ENCODE measurements at regions of chr10 and their contacts with region 1.

Region 1: DNA sequence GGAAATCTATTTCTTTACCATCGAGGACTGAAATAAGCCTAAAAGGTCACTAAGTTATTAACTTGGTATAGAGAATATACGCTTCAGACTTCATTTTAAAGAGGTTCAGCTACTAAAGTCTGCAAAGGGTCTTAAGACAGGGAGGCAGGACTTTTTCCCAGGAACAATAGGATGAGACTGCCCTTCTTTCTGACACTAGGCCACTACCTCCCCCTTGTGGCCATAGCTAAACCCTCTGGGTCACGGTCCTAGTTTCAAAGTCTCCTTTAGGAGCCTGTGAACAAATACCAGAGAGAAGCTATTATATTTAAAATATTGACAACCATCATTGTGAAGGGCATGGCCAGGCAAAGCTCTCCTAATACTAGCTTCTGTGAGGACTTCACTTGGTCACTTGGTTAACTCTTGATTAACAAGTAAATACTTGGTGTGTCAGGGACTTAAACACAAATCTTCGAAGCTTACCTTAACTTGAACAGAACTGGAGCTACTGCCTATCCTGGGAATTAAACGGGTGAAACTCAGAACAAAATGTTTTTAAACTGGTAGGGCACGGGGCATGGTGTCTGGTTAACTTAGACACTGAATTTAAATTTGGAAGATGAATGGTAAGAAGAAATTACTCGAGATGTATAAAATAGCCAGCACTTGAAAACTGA is 75.6 kb downstream of the CCDC6 start:
- DNase-seq: no peak
- H3K4me3 ChIP-seq: no peak overlapping the region
- CTCF ChIP-seq: peak; percentile 77

Region 2: GRCh38 chr10:59812519-59813122 is 18.1 kb before region 1 on chr10:
- CTCF ChIA-PET with region 1: interaction called, 12 read pairs
- POLR2A ChIA-PET with region 1: no interaction called
- DNase-seq: no peak
- H3K4me3 ChIP-seq: no peak overlapping the region
- CTCF ChIP-seq: no peak

Region 3: DNA sequence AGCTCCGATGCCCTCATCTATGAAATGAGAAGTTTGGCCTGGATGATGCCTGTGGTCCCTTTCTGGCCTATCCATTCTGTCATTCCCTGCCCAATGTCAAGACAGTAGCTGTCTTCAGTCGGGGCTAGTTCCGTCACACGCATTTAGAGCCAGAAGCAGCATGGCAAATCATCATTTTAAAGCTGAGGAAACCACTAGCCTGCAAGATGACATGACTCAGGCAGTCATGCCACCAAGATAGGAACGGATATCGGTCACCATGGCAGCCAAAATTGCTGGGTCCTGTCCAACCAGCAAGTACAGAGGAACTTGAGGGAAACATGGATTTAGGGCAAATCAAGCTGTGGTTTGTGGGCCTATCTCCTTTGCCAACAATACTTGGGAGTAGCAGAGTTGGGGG is 13.0 kb before region 1 on chr10:
- CTCF ChIA-PET with region 1: interaction called, 12 read pairs
- POLR2A ChIA-PET with region 1: no interaction called
- DNase-seq: no peak
- H3K4me3 ChIP-seq: no peak overlapping the region
- CTCF ChIP-seq: no peak

Region 4: GRCh38 chr10:59847326-59847725 is 16.6 kb after region 1 on chr10:
- CTCF ChIA-PET with region 1: interaction called, 14 read pairs
- POLR2A ChIA-PET with region 1: no interaction called
- DNase-seq: no peak
- H3K4me3 ChIP-seq: no peak overlapping the region
- CTCF ChIP-seq: no peak

Region 5: DNA sequence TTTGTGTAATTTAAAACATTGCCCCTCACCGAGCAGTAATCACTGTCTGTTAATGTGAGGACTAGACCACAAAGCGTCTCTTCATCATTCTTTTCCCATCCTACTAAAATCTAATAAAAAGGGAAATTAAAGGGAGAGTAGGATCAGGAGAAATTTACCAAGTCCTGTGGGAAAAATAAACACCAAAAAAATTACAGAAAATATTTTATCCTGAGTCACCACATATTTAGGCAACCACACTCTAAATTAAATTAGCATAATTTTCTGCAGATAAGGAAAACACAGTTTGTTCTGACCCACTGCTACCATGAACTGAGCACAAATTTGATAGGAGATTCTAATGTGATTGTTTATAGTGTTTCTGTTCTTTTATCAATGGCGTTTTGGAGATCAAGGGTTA is 26.3 kb after region 1 on chr10:
- CTCF ChIA-PET with region 1: interaction called, 10 read pairs
- POLR2A ChIA-PET with region 1: no interaction called
- DNase-seq: no peak
- H3K4me3 ChIP-seq: no peak overlapping the region
- CTCF ChIP-seq: no peak

Region 6: DNA sequence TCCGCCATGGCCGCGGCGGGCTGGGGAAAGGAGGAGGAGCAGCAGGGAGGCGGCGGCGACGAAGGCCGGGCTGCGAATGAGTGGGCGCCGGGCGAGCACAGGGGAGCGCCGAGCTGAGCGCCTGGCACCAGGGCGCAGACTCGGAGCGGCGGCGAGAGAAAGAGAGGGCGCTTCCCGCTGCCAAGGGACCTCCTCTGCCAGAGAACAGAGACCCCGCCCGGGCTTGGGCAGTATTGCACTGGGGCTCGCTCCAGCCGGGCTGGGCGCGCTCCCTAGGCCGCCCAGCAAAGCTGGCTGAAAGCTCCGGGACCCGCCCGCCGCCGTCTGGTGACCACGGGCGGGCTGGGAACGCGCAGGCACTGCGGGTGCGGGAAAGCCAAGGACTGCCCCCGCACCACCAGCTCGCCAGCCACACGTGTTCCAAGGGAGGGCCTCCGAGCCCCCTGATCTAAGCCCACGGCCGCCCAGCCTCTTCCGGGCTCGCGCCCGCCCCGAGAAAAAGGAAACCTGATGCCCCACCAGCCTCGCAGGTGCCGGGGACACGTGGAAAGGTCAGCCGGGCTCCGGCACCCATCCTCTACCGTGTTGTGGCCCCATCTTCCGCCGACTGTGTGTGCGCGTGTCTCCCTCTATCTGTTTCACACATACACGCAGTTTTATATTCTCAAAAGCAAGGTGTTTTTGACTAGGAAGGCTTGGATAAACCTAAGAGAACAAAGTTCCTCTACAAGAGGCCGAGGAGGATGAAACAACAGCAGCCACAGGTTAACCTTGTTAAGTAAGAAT is 75.9 kb after region 1 on chr10 and contains the start of gene CCDC6:
- CTCF ChIA-PET with region 1: interaction called, 33 read pairs
- POLR2A ChIA-PET with region 1: interaction called, 5 read pairs
- DNase-seq: peak; percentile 49
- H3K4me3 ChIP-seq: peak within 1 kb of the TSS; percentile 91
- CTCF ChIP-seq: peak; percentile 88

Measured in AG04449 (cell line).